Dorsolateral prefrontal cortex (tissue), 120 donors: ENCODE measurements at regions of chr2 and their contacts with region 1.

Region 1: GRCh38 chr2:209423562-209424198 is at the start of gene MAP2:
- DNase-seq: peak; percentile 55 to 93 (median 81)
- H3K4me3 ChIP-seq: peak within 1 kb of the TSS; percentile 47 to 89 (median 77)
- H3K27ac ChIP-seq: peak within 1 kb of the TSS in 58 of 59 donors; percentile 8 to 89 (median 74)
- H3K27me3 ChIP-seq: no peaks in the 10 kb centered on the region
- CTCF ChIP-seq: peak in 55 of 56 donors; percentile 32 to 97 (median 80)
- total RNA-seq, gene MAP2: 231 to 1,291 (median 925) TPM

Region 2: GRCh38 chr2:209334198-209335017 is 89.3 kb before region 1 on chr2:
- intact Hi-C with region 1: loop called (anchors 5 to 10 kb)
- DNase-seq: peak in 8 of 10 donors; percentile 30 to 69 (median 49)
- H3K4me3 ChIP-seq: peak overlapping the region in 8 of 59 donors; percentile 3 to 33 (median 21)
- H3K27ac ChIP-seq: no peak overlapping the region
- H3K27me3 ChIP-seq: peaks cover 0 to 4% (median 0%) of the 10 kb centered on the region in 45 donors
- CTCF ChIP-seq: peak; percentile 73 to 98 (median 88)

Region 3: DNA sequence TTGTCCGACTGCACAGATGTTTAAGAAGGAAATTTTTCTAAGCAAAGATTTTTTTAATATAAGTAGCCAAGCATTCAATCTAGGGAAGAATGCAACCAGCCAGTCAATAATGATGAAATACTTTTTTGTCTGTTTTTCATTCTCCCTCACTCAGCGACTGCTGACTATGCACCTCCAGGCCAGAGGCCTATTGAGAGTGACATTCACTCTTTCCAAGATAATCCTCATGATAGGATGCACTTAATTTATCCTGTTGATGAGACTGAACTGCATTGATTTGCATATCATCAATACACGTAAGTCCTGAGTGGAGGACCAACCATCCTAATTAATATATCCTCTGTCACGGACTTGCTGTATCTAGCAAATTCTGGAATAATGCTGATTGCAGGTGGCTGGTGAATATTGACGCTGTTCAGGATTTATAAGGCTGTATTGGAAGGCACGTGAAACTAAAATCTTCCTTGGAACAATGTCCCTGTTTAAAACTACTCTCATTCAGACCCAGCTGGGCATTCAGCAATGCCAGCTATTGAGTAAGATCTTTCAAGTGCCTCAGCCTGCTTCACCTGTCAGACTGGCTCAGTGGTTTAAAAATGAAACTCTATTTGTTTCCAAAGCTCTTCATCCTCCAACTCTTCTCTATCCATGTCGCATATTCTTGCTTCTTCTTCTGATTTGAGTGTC is 142.4 kb after region 1 on chr2:
- intact Hi-C with region 1: loop called in 1 of 2 experiments (anchors 5 kb)
- DNase-seq: no peak
- H3K4me3 ChIP-seq: no peak overlapping the region
- H3K27ac ChIP-seq: peak overlapping the region in 5 of 59 donors; percentile 5 to 31 (median 18)
- H3K27me3 ChIP-seq: no peaks in the 10 kb centered on the region
- CTCF ChIP-seq: no peak

Region 4: DNA sequence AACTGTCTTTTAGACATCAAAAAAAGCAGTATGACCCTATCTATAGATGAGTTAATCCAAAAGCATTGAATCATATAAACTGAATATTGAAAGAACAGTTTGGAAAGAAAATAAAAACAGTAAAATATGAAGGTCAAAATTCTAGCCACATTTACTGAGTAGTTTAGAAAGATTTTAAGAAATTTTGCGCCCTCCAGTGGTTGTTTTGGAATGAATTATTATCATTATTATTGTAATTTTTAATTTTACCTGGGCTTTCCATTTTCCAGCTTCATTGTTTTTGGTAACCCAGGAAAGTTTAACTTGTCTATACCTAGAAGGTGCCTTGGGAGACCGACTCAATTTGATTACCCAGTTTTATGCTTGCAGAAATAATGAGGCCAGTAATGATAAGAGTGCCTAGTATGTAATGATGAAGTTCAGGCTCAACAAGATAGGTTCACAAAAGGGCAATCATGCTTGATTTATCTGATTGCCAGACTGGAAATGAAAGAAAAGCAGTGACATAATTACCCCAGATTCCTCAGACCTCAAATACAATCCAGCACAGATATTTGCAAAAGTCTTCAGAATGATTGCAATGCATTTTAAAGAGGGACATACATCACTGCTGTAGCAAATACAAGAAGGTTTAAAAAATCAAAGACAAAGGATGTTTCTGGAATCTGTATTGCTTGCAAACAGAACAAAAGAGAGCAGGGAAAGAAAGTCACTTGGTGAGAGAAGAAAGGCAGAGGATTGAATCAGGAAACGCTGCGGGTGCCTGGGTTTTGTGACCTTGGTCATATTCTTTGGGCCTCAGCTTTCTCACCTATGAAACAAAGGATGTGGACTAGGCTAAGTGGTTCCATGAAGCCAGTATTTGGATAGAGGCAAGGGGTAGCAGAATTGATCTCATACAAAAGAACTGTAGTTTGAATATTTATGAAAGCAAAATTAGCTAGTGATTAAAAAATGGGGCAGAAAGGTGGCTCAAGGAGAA is 154.0 kb after region 1 on chr2:
- intact Hi-C with region 1: loop called (anchors 5 kb)
- DNase-seq: no peak
- H3K4me3 ChIP-seq: peak overlapping the region in 2 of 59 donors; percentile 57 to 65
- H3K27ac ChIP-seq: peak overlapping the region in 37 of 59 donors; percentile 0 to 87 (median 59)
- H3K27me3 ChIP-seq: peaks cover 0 to 6% (median 0%) of the 10 kb centered on the region in 45 donors
- CTCF ChIP-seq: peak; percentile 26 to 73 (median 54)

Region 5: DNA sequence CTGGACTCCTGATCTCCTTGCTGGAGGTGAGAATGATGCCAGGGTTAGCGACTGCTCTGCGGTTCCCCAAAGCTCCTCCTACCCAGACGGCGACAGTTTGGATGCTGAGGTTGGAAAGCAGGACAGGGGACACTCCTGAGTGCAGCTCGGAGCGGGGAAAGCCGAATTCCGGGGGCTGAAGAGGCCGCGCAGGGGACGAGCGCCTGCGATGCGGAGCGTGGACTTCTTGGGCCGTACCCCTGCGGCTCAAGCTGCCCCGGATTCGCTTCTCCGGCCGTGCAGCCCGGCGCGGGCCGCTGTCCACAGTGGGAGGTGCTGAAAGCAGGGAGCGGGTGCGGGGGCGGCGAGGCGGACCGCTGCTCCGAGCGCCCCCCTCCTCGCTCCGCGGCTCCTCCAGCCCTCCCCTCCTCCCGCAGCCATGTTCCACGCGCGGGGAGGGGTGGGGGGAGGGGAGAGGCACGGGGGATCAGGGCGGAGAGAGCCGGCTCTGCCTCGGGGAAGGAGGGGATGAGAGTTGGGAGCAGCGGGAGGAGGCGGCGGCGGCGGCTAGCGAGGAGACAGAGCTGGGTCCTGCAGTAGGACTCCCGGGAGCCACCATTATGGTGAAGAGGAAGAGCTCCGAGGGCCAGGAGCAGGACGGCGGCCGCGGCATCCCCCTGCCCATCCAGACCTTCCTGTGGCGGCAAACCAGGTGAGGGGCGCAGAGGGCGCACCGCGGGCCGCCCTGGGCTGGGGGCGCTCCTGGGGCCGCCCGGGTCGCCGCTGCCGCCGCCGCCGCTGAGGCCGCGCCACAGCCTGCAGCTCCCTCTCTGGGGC is 348.0 kb after region 1 on chr2 and contains the start of gene UNC80:
- intact Hi-C with region 1: loop called in 1 of 2 experiments (anchors 10 kb)
- DNase-seq: peak; percentile 35 to 80 (median 72)
- H3K4me3 ChIP-seq: peak within 1 kb of the TSS; percentile 36 to 77 (median 59)
- H3K27ac ChIP-seq: peak within 1 kb of the TSS in 54 of 59 donors; percentile 6 to 89 (median 74)
- H3K27me3 ChIP-seq: peaks cover 0 to 24% (median 0%) of the 10 kb centered on the region in 45 donors
- CTCF ChIP-seq: peak in 8 of 56 donors; percentile 7 to 24 (median 14)
- total RNA-seq, gene UNC80: 41.0 to 151 (median 108) TPM